Heart right ventricle (tissue), 16 donors: ENCODE measurements at regions of chr7 and their contacts with region 1.

Region 1: DNA sequence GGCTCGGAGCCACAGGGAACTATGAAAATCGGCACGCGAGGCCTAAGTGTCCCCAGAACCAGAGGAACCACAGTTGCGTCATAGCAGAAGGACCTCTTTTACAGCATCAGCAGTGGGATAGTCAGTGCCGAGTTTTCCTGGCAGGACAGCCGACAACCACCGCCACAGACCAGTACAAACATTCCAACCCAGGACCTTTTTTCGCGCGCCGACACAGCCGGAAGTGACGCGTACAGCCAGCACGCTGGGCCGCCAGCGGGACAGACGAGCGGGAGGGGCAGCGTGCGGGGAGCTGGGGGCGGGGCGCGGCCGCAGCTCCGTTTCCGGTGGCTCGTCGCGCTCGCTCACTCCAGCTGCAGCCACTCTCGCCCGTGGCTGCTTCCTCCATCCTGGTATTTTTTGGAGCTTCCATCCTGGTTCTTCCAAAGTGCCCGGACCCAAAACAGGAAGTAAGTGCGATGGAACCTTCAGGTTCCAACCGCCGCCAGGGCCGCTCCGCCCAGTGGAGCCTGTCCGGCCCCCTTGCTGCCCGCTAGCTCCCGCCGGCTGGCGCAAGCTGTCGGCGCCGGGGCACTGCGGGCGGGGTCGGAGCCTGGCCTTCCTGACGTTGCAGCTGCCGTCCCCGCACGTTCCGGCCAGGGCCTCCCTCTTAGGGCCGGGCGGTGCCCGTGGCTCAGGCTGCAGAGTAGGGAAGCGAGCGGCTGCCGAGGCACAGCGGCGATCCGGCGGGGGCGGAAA is at the start of gene DMTF1:
- DNase-seq: peak; percentile 95
- ATAC-seq: peak; percentile 95 to 99 (median 98)
- H3K4me3 ChIP-seq: peak within 1 kb of the TSS; percentile 57 to 86 (median 77)
- H3K27ac ChIP-seq: peak within 1 kb of the TSS; percentile 94 to 99 (median 97)
- H3K4me1 ChIP-seq: peaks cover 0 to 53% (median 45%) of the 10 kb centered on the region in 9 donors
- H3K27me3 ChIP-seq: no peaks in the 10 kb centered on the region
- CTCF ChIP-seq: peak in 4 of 9 donors; percentile 3 to 21 (median 16)
- total RNA-seq, gene DMTF1: 18.0 to 26.5 (median 21.8) TPM

Region 2: GRCh38 chr7:86926732-86927131 is 225.5 kb before region 1 on chr7:
- intact Hi-C with region 1: loop called in 5 of 10 experiments (anchors 5 kb)
- DNase-seq: no peak
- ATAC-seq: peak in 1 of 8 donors; percentile 42
- H3K4me3 ChIP-seq: no peak overlapping the region
- H3K27ac ChIP-seq: no peak overlapping the region
- H3K4me1 ChIP-seq: peaks cover 0 to 6% (median 2%) of the 10 kb centered on the region in 9 donors
- H3K27me3 ChIP-seq: no peaks in the 10 kb centered on the region
- CTCF ChIP-seq: peak; percentile 38 to 78 (median 67)

Region 3: GRCh38 chr7:86932038-86932512 is 220.2 kb before region 1 on chr7:
- intact Hi-C with region 1: loop called in 9 of 10 experiments (anchors 2 to 5 kb)
- DNase-seq: no peak
- ATAC-seq: peak; percentile 71 to 98 (median 92)
- H3K4me3 ChIP-seq: no peak overlapping the region
- H3K27ac ChIP-seq: peak overlapping the region in 9 of 10 donors; percentile 1 to 82 (median 59)
- H3K4me1 ChIP-seq: peaks cover 0 to 17% (median 9%) of the 10 kb centered on the region in 9 donors
- H3K27me3 ChIP-seq: no peaks in the 10 kb centered on the region
- CTCF ChIP-seq: no peak

Region 4: GRCh38 chr7:86939197-86939814 is 213.0 kb before region 1 on chr7:
- intact Hi-C with region 1: loop called in 8 of 10 experiments (anchors 1 to 5 kb)
- DNase-seq: peak in 1 of 2 donors; percentile 66
- ATAC-seq: peak in 6 of 8 donors; percentile 43 to 73 (median 55)
- H3K4me3 ChIP-seq: no peak overlapping the region
- H3K27ac ChIP-seq: no peak overlapping the region
- H3K4me1 ChIP-seq: no peaks in the 10 kb centered on the region
- H3K27me3 ChIP-seq: no peaks in the 10 kb centered on the region
- CTCF ChIP-seq: peak; percentile 35 to 80 (median 73)

Region 5: DNA sequence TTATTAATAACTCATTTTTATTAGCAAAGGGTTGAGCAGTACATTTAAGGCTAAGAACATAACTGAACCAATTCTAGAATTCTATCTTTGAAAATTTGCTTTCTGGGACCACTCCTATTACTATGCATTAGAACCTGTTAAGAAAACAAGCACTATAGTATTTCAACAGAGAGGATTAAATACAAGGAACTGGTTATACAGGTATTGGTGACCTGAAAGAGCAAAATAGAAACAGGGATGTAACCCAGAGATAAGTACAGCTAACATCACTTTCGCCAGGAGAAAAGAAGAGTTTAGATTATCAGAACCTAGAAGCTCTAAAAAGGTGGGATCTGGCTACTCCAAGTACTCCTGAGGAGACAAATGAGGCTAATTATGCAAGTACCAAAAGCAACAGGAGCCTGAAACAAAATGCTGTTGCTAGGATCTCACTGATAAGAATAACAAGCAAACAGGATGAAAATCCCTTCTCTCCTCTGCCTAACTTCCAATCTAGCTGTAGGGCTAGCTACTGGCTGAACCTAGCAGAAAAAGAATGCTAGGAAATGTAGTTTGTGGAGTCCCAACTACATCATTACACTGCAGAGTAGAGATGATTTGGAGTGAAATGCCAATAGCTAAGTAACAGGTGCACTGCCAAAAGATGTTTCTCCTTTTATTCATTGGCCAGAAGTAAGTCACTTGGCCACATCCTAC is 60.6 kb before region 1 on chr7:
- intact Hi-C with region 1: no loop called
- DNase-seq: no peak
- ATAC-seq: no peak
- H3K4me3 ChIP-seq: no peak overlapping the region
- H3K27ac ChIP-seq: no peak overlapping the region
- H3K4me1 ChIP-seq: no peaks in the 10 kb centered on the region
- H3K27me3 ChIP-seq: no peaks in the 10 kb centered on the region
- CTCF ChIP-seq: no peak

Region 6: GRCh38 chr7:87219545-87220025 is 67.3 kb after region 1 on chr7 and contains the start of gene TMEM243:
- intact Hi-C with region 1: loop called in 5 of 10 experiments (anchors 1 to 5 kb)
- DNase-seq: peak; percentile 79 to 80
- ATAC-seq: peak; percentile 90 to 94 (median 92)
- H3K4me3 ChIP-seq: peak within 1 kb of the TSS; percentile 53 to 93 (median 82)
- H3K27ac ChIP-seq: peak within 1 kb of the TSS; percentile 37 to 92 (median 86)
- H3K4me1 ChIP-seq: peaks cover 0 to 49% (median 22%) of the 10 kb centered on the region in 9 donors
- H3K27me3 ChIP-seq: peaks cover 0 to 33% (median 4%) of the 10 kb centered on the region in 7 donors
- CTCF ChIP-seq: peak in 4 of 9 donors; percentile 22 to 37 (median 33)
- total RNA-seq, gene TMEM243: 2.1 to 7.0 (median 3.9) TPM

Region 7: GRCh38 chr7:87345166-87345927 is 193.1 kb after region 1 on chr7 and contains the start of gene CROT:
- intact Hi-C with region 1: loop called in 1 of 10 experiments (anchors 1 kb)
- DNase-seq: peak; percentile 96 to 97
- ATAC-seq: peak; percentile 100
- H3K4me3 ChIP-seq: peak within 1 kb of the TSS; percentile 55 to 89 (median 74)
- H3K27ac ChIP-seq: peak within 1 kb of the TSS; percentile 58 to 89 (median 82)
- H3K4me1 ChIP-seq: peaks cover 0 to 35% (median 16%) of the 10 kb centered on the region in 9 donors
- H3K27me3 ChIP-seq: no peaks in the 10 kb centered on the region
- CTCF ChIP-seq: peak in 1 of 9 donors; percentile 9
- total RNA-seq, gene CROT: 4.5 to 10.6 (median 7.7) TPM